B cell (primary cell): ENCODE measurements at regions of chr19 and their contacts with region 1.

Region 1: DNA sequence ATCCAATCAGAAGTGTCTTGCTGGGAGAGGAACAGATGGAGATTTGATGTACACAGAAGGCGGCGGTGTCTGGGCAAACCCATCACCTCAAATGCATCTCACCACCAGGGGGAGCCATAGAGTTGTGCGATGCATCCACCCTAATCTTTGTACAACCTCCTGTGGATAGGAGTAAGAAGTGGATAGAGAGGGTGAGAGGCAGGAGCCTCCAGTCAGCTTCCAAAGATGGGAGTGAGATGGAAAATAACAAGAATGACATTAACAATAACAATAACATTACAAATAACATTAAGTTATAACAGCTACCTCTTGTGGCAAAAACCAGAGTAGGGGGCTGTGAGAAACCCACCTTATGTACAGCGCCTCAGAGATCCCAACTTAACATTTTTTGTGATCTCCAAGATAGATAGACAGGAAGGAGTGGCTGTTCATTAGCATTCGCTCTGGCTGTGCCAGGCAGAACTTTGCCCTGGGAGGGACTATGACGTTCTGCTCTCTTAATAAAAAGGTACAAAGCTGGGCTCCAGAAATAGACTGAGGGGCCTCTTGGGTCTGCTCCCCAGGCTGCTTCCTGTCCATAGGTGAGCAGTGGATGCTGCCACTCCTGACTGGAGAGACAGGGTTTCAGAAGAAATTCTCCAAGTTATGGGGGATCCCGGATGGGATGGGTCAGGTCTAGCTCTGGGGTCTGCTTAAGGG is 5.2 kb upstream of the CEACAM18 start:
- DNase-seq: peak; percentile 86
- ATAC-seq: peak; percentile 66
- H3K4me3 ChIP-seq: no peak overlapping the region
- H3K4me3 Mint-ChIP-seq: no peak overlapping the region
- H3K27ac ChIP-seq: no peak overlapping the region
- H3K27ac Mint-ChIP-seq: no peak overlapping the region
- H3K4me1 ChIP-seq: peaks cover 4 to 5% of the 10 kb centered on the region in 2 donors
- H3K4me1 Mint-ChIP-seq: peaks cover 4% of the 10 kb centered on the region
- H3K27me3 ChIP-seq: peaks cover 0 to 16% (median 1%) of the 10 kb centered on the region in 4 experiments
- H3K27me3 Mint-ChIP-seq: peaks cover 25% of the 10 kb centered on the region
- CTCF ChIP-seq: peak; percentile 98

Region 2: DNA sequence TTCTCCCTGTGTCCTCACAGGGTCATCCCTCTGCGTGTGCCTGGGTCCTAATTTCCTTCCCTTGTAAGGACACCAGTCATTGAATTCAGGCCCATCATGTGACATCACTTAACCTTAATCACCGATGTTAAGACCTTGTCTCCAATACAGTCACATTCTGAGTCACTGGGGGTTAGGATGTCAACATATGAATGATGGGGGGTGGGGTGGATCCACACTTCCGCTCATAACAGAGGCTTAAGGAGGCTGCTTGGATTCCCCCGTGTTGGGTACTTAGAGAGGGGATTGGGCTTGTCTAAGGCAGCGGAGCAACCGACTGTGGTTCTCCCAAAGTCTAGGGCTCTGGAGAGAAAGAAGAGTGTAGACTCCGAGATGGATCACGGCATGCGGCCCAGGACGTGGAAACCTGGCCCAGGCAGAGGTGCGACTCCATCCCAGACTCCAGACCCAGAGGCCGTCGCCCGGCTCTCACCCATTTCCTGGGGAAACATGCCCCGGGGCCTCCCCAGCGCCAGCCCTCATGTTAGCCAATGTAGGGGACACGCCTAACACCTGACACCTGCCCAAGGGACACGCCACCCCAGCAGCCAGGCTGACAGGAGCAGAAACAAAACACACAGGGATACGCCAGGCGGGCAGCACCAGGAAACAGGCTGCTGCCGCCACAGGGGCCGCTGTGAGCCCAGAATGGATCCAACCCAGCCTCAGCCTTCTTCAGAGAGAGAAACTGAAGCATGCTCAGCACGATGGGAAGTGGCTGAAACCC is 178.8 kb before region 1 on chr19:
- CTCF ChIA-PET with region 1: no interaction called
- POLR2A ChIA-PET with region 1: no interaction called
- intact Hi-C with region 1: no loop called
- DNase-seq: no peak
- ATAC-seq: no peak
- H3K4me3 ChIP-seq: no peak overlapping the region
- H3K4me3 Mint-ChIP-seq: no peak overlapping the region
- H3K27ac ChIP-seq: no peak overlapping the region
- H3K27ac Mint-ChIP-seq: no peak overlapping the region
- H3K4me1 ChIP-seq: no peaks in the 10 kb centered on the region
- H3K4me1 Mint-ChIP-seq: no peaks in the 10 kb centered on the region
- H3K27me3 ChIP-seq: peaks cover 0 to 7% (median 0%) of the 10 kb centered on the region in 4 experiments
- H3K27me3 Mint-ChIP-seq: peaks cover 23% of the 10 kb centered on the region
- CTCF ChIP-seq: no peak

Region 3: DNA sequence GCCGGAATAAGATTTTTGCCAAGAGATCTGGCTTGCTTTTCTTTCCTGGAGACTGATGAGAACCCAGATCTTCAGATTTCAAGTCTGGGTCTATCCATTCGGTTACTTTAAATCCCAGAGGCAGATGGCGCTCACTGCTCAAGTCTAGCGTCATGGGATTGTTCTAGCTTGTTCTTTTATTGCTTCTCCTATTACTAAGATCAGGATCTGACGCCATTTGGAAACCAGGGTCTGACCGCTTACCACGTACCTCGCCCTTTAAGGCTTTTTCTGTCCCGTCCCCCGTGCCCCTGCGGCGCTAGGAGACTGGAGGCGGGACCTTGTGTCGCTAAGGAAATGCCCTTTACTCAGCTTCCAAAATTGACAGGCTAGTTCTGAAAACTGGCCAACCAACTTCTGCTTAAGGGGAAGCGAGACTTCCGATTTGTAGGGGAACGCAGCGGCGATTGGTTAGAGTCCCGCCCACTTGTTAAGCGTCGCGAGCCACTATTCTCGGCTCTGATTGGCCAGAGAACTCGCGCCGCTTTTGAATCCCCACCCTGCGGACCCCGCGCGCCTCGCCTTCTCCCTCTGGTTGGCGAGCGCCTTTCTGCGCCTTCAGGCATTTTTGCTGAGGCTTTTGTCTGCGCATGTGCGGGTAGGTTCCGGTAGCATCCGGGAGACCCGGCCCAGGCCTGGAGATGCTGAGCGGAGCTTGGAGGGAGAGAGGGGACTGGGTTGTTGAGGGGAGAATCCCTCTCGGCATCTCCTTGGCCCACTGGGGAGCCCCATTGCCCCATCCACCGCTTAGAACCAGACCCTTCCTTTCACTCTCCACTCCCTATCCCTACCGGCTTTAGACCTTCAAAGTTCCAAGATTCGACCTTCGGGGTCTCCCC is 79.0 kb before region 1 on chr19:
- CTCF ChIA-PET with region 1: interaction called, 11 read pairs
- POLR2A ChIA-PET with region 1: no interaction called
- intact Hi-C with region 1: loop called (anchors 2 kb)
- DNase-seq: peak; percentile 95
- ATAC-seq: peak; percentile 92
- H3K4me3 ChIP-seq: peak overlapping the region; percentile 43 to 74 (median 62)
- H3K4me3 Mint-ChIP-seq: peak overlapping the region; percentile 85
- H3K27ac ChIP-seq: peak overlapping the region; percentile 63 to 73
- H3K27ac Mint-ChIP-seq: peak overlapping the region; percentile 78
- H3K4me1 ChIP-seq: peaks cover 22 to 33% of the 10 kb centered on the region in 2 donors
- H3K4me1 Mint-ChIP-seq: peaks cover 30% of the 10 kb centered on the region
- H3K27me3 ChIP-seq: peaks cover 0 to 4% (median 0%) of the 10 kb centered on the region in 4 experiments
- H3K27me3 Mint-ChIP-seq: no peaks in the 10 kb centered on the region
- CTCF ChIP-seq: peak; percentile 13

Region 4: DNA sequence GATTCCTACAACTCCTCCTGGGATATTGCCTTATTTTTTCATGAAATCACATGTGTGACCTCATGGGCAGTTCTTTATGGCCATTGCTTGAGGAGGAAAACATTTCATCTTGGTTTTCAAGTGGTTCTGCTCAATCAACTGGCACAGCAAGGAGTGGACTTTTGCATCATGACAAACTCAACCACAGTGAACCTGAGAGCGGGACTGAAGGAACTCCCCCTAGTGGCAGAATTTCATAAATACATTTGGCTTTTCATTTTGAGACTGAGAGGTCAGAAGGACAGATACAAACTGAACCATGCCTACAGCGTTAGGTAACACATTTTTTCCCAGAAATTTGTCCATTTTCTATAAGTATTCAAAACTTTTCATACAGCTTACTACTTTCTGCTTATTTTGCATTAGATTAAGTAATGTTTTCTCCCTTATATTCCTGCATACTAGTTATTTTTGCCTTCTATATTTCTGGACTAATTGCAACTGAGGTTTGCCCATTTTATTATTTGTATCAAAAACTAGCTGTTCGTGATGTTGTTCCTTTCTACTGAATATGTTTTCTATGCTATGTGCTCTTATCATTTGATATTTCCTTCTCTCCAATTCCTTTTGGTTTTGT is 41.8 kb after region 1 on chr19:
- CTCF ChIA-PET with region 1: interaction called, 40 read pairs
- POLR2A ChIA-PET with region 1: no interaction called
- intact Hi-C with region 1: loop called (anchors 2 kb)
- DNase-seq: peak; percentile 74
- ATAC-seq: peak; percentile 56
- H3K4me3 ChIP-seq: no peak overlapping the region
- H3K4me3 Mint-ChIP-seq: no peak overlapping the region
- H3K27ac ChIP-seq: no peak overlapping the region
- H3K27ac Mint-ChIP-seq: no peak overlapping the region
- H3K4me1 ChIP-seq: peaks cover 6 to 7% of the 10 kb centered on the region in 2 donors
- H3K4me1 Mint-ChIP-seq: peaks cover 7% of the 10 kb centered on the region
- H3K27me3 ChIP-seq: peaks cover 0 to 4% (median 0%) of the 10 kb centered on the region in 4 experiments
- H3K27me3 Mint-ChIP-seq: peaks cover 5% of the 10 kb centered on the region
- CTCF ChIP-seq: peak; percentile 89

Region 5: GRCh38 chr19:51552996-51553725 is 80.0 kb after region 1 on chr19:
- CTCF ChIA-PET with region 1: interaction called, 24 read pairs
- POLR2A ChIA-PET with region 1: no interaction called
- intact Hi-C with region 1: no loop called
- DNase-seq: peak; percentile 74
- ATAC-seq: no peak
- H3K4me3 ChIP-seq: peak overlapping the region in 4 of 5 experiments; percentile 55 to 87 (median 74)
- H3K4me3 Mint-ChIP-seq: peak overlapping the region; percentile 95
- H3K27ac ChIP-seq: no peak overlapping the region
- H3K27ac Mint-ChIP-seq: no peak overlapping the region
- H3K4me1 ChIP-seq: peaks cover 43 to 61% of the 10 kb centered on the region in 2 donors
- H3K4me1 Mint-ChIP-seq: peaks cover 78% of the 10 kb centered on the region
- H3K27me3 ChIP-seq: no peaks in the 10 kb centered on the region
- H3K27me3 Mint-ChIP-seq: no peaks in the 10 kb centered on the region
- CTCF ChIP-seq: no peak

Region 6: GRCh38 chr19:51615949-51616348 is 142.8 kb after region 1 on chr19:
- CTCF ChIA-PET with region 1: interaction called, 20 read pairs
- POLR2A ChIA-PET with region 1: no interaction called
- intact Hi-C with region 1: no loop called
- DNase-seq: no peak
- ATAC-seq: no peak
- H3K4me3 ChIP-seq: no peak overlapping the region
- H3K4me3 Mint-ChIP-seq: no peak overlapping the region
- H3K27ac ChIP-seq: no peak overlapping the region
- H3K27ac Mint-ChIP-seq: no peak overlapping the region
- H3K4me1 ChIP-seq: peaks cover 13 to 14% of the 10 kb centered on the region in 2 donors
- H3K4me1 Mint-ChIP-seq: peaks cover 31% of the 10 kb centered on the region
- H3K27me3 ChIP-seq: no peaks in the 10 kb centered on the region
- H3K27me3 Mint-ChIP-seq: no peaks in the 10 kb centered on the region
- CTCF ChIP-seq: no peak

Region 7: DNA sequence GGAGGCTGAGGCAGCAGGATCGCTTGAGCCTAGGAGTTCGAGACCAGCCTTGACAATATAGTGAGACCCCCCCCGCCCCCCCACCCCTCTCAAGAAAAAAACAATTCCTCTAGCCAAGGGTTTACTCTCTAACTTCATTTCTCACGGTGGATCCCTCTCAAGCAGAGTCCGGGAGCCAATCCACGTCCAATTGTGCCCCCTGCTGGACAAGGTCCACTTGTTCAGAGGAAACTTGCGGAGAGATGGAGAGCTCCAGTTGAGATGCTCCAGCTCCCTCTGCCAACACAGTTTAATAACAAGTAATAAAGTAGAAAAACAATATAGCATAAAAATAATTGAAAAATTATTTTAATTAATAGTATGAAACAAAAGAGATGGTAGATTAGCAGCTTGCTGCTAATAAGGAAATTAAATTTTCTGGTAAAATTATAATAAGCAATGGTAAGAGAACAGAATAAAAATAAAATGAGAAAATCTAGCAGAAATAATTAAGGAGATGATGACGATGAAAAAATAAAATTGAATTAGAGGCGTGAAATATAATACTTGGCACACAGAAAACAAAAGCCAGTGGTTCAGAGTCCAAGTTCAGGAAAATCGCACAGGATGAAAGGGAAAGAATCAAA is 187.9 kb after region 1 on chr19:
- CTCF ChIA-PET with region 1: interaction called, 681 read pairs
- POLR2A ChIA-PET with region 1: interaction called, 6 read pairs
- intact Hi-C with region 1: loop called (anchors 1 kb)
- DNase-seq: peak; percentile 80
- ATAC-seq: peak; percentile 62
- H3K4me3 ChIP-seq: no peak overlapping the region
- H3K4me3 Mint-ChIP-seq: no peak overlapping the region
- H3K27ac ChIP-seq: no peak overlapping the region
- H3K27ac Mint-ChIP-seq: no peak overlapping the region
- H3K4me1 ChIP-seq: peaks cover 7 to 8% of the 10 kb centered on the region in 2 donors
- H3K4me1 Mint-ChIP-seq: peaks cover 9% of the 10 kb centered on the region
- H3K27me3 ChIP-seq: peaks cover 0 to 28% (median 18%) of the 10 kb centered on the region in 4 experiments
- H3K27me3 Mint-ChIP-seq: peaks cover 38% of the 10 kb centered on the region
- CTCF ChIP-seq: peak; percentile 75

Region 8: GRCh38 chr19:51777570-51778462 is 304.7 kb after region 1 on chr19:
- CTCF ChIA-PET with region 1: interaction called, 17 read pairs
- POLR2A ChIA-PET with region 1: no interaction called
- intact Hi-C with region 1: loop called (anchors 1 kb)
- DNase-seq: peak; percentile 75
- ATAC-seq: peak; percentile 51
- H3K4me3 ChIP-seq: no peak overlapping the region
- H3K4me3 Mint-ChIP-seq: no peak overlapping the region
- H3K27ac ChIP-seq: no peak overlapping the region
- H3K27ac Mint-ChIP-seq: no peak overlapping the region
- H3K4me1 ChIP-seq: peaks cover 0 to 6% of the 10 kb centered on the region in 2 donors
- H3K4me1 Mint-ChIP-seq: peaks cover 2% of the 10 kb centered on the region
- H3K27me3 ChIP-seq: peaks cover 0 to 13% (median 5%) of the 10 kb centered on the region in 4 experiments
- H3K27me3 Mint-ChIP-seq: peaks cover 62% of the 10 kb centered on the region
- CTCF ChIP-seq: peak; percentile 80